Head of caudate nucleus (tissue), 42 donors: ENCODE measurements at regions of chr7 and their contacts with region 1.

Region 1: DNA sequence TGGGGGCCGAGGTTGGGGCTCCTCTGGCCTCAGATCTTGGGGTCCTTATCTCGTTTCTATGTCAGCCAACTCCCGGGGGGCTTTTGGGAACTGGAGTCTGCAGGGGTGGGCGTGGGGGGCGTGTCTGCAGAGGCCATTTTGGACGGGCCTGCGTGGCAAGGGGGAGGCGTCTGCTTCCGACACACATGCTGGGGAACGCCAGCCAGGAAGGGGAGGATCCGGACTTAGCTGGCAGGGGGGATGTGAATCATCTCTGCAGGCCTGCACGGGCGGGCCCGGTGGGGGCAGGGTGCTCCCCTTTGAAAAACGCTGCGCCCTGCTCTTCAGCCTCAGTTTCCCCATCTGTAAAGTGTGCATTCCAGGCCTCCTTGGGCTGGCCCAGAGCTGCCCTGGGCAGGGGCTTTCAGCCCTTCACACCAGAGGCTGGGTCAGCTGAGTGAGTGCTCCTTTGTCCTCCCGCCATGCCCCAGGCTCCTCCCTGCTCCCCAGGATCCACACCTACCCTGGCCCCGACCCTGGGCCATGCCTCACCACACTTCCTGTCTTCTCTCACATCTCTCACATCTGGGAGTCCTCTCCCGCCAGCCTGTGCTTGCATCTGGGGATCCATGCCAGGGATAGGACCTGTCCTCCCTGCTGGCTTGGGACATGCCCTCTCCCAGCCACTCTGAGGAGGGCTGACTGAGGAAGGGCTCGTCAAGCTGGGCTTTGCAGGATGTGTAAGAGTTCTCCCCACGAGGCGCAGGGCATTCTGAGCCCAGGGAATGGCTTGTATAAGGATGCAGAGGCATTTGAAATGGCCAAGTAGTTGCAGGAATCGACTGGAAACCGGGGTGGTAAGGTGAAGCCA is 172.6 kb upstream of the TNRC18 start:
- DNase-seq: peak; percentile 44 to 93 (median 74)

Region 2: GRCh38 chr7:5634107-5634950 is 38.1 kb after region 1 on chr7:
- intact Hi-C with region 1: loop called (anchors 5 kb)
- DNase-seq: peak; percentile 51 to 88 (median 73)